T-cell (primary cell): ENCODE measurements at regions of chr14 and their contacts with region 1.

Region 1: DNA sequence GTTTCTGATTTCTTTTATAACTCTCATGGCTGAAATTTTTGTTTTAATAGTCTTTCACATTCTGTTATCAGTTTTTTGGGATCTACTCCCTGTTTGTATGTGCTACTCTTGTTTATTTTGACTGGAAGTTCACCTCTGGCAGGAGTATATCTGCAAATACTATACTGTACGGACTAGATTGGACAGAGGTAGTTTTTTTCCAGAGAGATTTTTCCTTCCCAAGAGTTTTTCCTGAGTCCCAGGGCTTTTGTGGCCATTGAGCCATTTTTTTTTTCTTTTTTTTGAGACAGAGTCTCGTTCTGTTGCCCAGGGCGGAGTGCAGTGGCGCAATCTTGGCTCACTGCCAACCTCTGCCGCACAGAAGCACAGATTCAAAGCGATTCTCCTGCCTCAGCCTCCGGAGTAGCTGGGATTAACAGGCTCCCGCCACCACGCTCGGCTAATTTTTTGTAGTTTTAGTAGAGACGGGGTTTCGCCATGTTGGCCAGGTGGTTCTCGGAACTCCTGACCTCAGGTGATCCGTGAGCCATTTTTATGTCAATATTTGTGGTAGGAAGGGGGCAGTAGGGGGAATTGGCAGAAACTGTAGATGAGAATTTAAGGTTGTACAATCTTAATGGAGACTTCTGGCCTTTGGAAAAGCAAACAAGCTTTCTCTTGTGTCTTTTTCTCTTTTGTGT is 19.3 kb downstream of the KTN1 start:
- DNase-seq: no peak
- ATAC-seq: no peak
- H3K4me3 ChIP-seq: no peak overlapping the region
- H3K4me3 Mint-ChIP-seq: no peak overlapping the region
- H3K27ac ChIP-seq: no peak overlapping the region
- H3K27ac Mint-ChIP-seq: no peak overlapping the region
- H3K4me1 ChIP-seq: peaks cover 0 to 3% of the 10 kb centered on the region in 2 experiments
- H3K4me1 Mint-ChIP-seq: peaks cover 29 to 53% (median 46%) of the 10 kb centered on the region in 3 donors
- H3K27me3 ChIP-seq: no peaks in the 10 kb centered on the region
- H3K27me3 Mint-ChIP-seq: no peaks in the 10 kb centered on the region

Region 2: DNA sequence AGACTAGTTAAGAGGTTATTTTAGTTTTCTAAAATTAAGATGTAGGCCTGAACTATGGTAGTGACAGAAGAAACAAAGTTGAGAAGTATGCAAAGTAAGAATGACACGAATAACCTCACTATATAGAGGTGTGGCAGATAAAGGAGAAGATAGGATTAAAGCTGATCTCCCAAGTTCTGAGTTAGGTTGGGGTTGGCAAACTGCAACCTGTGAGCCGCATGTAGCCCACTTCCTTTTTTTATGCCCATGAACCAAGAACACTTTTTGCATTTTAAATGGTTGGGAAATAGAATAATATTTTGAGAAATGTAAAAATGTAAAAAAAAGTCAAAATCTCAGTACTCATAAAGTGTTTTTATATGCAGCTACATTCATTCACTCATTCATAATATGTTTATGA is 15.0 kb after region 1 on chr14:
- CTCF ChIA-PET with region 1: interaction called in 1 of 2 experiments, 7 read pairs
- POLR2A ChIA-PET with region 1: interaction called in 1 of 2 experiments, 14 read pairs
- DNase-seq: no peak
- ATAC-seq: no peak
- H3K4me3 ChIP-seq: no peak overlapping the region
- H3K4me3 Mint-ChIP-seq: no peak overlapping the region
- H3K27ac ChIP-seq: no peak overlapping the region
- H3K27ac Mint-ChIP-seq: no peak overlapping the region
- H3K4me1 ChIP-seq: peaks cover 0 to 2% of the 10 kb centered on the region in 2 experiments
- H3K4me1 Mint-ChIP-seq: peaks cover 22 to 32% (median 27%) of the 10 kb centered on the region in 3 donors
- H3K27me3 ChIP-seq: no peaks in the 10 kb centered on the region
- H3K27me3 Mint-ChIP-seq: no peaks in the 10 kb centered on the region

Region 3: GRCh38 chr14:55654243-55654642 is 54.9 kb after region 1 on chr14:
- CTCF ChIA-PET with region 1: no interaction called
- POLR2A ChIA-PET with region 1: no interaction called
- DNase-seq: no peak
- ATAC-seq: no peak
- H3K4me3 ChIP-seq: no peak overlapping the region
- H3K4me3 Mint-ChIP-seq: no peak overlapping the region
- H3K27ac ChIP-seq: no peak overlapping the region
- H3K27ac Mint-ChIP-seq: no peak overlapping the region
- H3K4me1 ChIP-seq: no peaks in the 10 kb centered on the region
- H3K4me1 Mint-ChIP-seq: no peaks in the 10 kb centered on the region
- H3K27me3 ChIP-seq: no peaks in the 10 kb centered on the region
- H3K27me3 Mint-ChIP-seq: no peaks in the 10 kb centered on the region

Region 4: GRCh38 chr14:57268161-57269069 is 1669.1 kb after region 1 on chr14 and contains the starts of genes AP5M1 and EXOC5:
- CTCF ChIA-PET with region 1: no interaction called
- POLR2A ChIA-PET with region 1: interaction called in 1 of 2 experiments, 11 read pairs
- DNase-seq: peak; percentile 80 to 96 (median 90)
- ATAC-seq: peak; percentile 86 to 89 (median 87)
- H3K4me3 ChIP-seq: peak within 1 kb of the TSS; percentile 62 to 92
- H3K4me3 Mint-ChIP-seq: peak within 1 kb of the TSS; percentile 97 to 100 (median 99)
- H3K27ac ChIP-seq: peak within 1 kb of the TSS; percentile 81
- H3K27ac Mint-ChIP-seq: peak within 1 kb of the TSS; percentile 99 to 100
- H3K4me1 ChIP-seq: peaks cover 15 to 16% of the 10 kb centered on the region in 2 experiments
- H3K4me1 Mint-ChIP-seq: peaks cover 71 to 75% (median 72%) of the 10 kb centered on the region in 3 donors
- H3K27me3 ChIP-seq: no peaks in the 10 kb centered on the region
- H3K27me3 Mint-ChIP-seq: no peaks in the 10 kb centered on the region
- total RNA-seq, gene AP5M1: 44.4 to 56.9 (median 48.5) TPM
- total RNA-seq, gene EXOC5: 28.3 to 45.1 (median 36.3) TPM